BJ (cell line): ENCODE measurements at regions of chr7 and their contacts with region 1.

Region 1: GRCh38 chr7:5580714-5581395 is 157.2 kb upstream of the TNRC18 start:
- DNase-seq: no peak
- H3K4me3 ChIP-seq: no peak overlapping the region
- H3K27me3 ChIP-seq: peaks cover 6% of the 10 kb centered on the region; the same call in 1 of the 2 replicates
- CTCF ChIP-seq: no peak; the same call in 1 of the 2 replicates

Region 2: GRCh38 chr7:5657901-5658300 is 77.0 kb after region 1 on chr7:
- CTCF ChIA-PET with region 1: no interaction called
- POLR2A ChIA-PET with region 1: interaction called, 10 read pairs
- DNase-seq: peak; percentile 43
- H3K4me3 ChIP-seq: no peak overlapping the region
- H3K27me3 ChIP-seq: no peaks in the 10 kb centered on the region
- CTCF ChIP-seq: no peak